A549 (cell line): ENCODE measurements at regions of chr11 and their contacts with region 1.

Region 1: GRCh38 chr11:93908689-93909088 is 58.3 kb upstream of the VSTM5 start:
- DNase-seq: peak in 1 of 2 experiments; percentile 20
- ATAC-seq: peak; percentile 54 to 69; a peak in 2 of 6 replicates
- H3K4me3 ChIP-seq: no peak overlapping the region
- H3K27ac ChIP-seq: no peak overlapping the region
- H3K4me1 ChIP-seq: 0 out of 3 replicates have a peak, but pooled peaks cover 6% of the 10 kb centered on the region
- CTCF ChIP-seq: no peak
- EP300 ChIP-seq: no peak
- POLR2A ChIP-seq: no peak
- RAD21 ChIP-seq: no peak

Region 2: DNA sequence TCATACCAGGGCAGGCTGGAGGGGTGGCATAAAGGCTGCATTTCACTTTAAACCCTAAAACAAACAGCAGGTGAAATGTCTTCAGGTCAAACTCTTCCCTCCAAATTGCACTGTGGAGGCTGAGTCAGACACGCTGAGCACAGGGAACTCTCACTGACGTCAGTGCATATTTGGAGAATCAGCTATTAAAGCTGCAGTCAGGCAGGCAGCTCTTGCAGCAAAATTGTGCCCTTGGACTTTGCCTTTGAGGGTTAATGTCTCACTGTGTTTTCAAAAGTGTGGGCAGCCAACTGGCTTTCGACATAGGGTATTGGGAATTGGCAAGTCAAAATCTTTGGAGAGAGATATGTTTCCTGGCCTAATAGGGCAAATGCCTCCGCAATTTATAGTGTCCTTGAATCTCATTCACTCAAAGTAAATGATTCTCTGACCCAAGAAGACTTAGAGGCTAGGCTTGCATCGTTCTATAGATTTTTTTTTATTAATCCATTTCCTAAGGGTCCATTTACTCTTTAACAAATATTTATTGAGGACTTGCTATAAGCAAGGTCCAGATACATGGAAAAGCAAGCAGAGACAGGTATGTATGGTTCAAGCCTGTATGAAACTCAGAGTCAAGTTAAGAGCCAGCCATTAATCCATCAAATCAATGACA is 337.8 kb before region 1 on chr11:
- CTCF ChIA-PET with region 1: no interaction called
- POLR2A ChIA-PET with region 1: no interaction called
- DNase-seq: peak; percentile 35 to 64
- ATAC-seq: peak; percentile 85 to 89
- H3K4me3 ChIP-seq: no peak overlapping the region
- H3K27ac ChIP-seq: peak overlapping the region; percentile 58 to 69
- H3K4me1 ChIP-seq: peaks cover 51% of the 10 kb centered on the region
- CTCF ChIP-seq: no peak
- EP300 ChIP-seq: peak in 1 of 2 experiments; percentile 48; a peak in 1 of 5 replicates
- POLR2A ChIP-seq: no peak
- RAD21 ChIP-seq: 0 out of 5 replicates have a peak, but pooled peaks of 1 of the 2 experiments have one; percentile 23

Region 3: GRCh38 chr11:93895106-93895862 is 13.4 kb before region 1 on chr11:
- CTCF ChIA-PET with region 1: interaction called, 23 read pairs
- POLR2A ChIA-PET with region 1: no interaction called
- DNase-seq: peak in 1 of 2 experiments; percentile 53
- ATAC-seq: peak; percentile 77 to 83
- H3K4me3 ChIP-seq: no peak overlapping the region
- H3K27ac ChIP-seq: no peak overlapping the region
- H3K4me1 ChIP-seq: no peaks in the 10 kb centered on the region
- CTCF ChIP-seq: peak; percentile 65
- EP300 ChIP-seq: no peak
- POLR2A ChIP-seq: no peak
- RAD21 ChIP-seq: peak; percentile 78 to 85

Region 4: GRCh38 chr11:93921695-93922468 is 13.2 kb after region 1 on chr11:
- CTCF ChIA-PET with region 1: interaction called, 10 read pairs
- POLR2A ChIA-PET with region 1: no interaction called
- DNase-seq: peak; percentile 30 to 51
- ATAC-seq: peak; percentile 56 to 87; a peak in 4 of 6 replicates
- H3K4me3 ChIP-seq: no peak overlapping the region
- H3K27ac ChIP-seq: no peak overlapping the region
- H3K4me1 ChIP-seq: no peaks in the 10 kb centered on the region
- CTCF ChIP-seq: peak; percentile 44
- EP300 ChIP-seq: no peak
- POLR2A ChIP-seq: no peak
- RAD21 ChIP-seq: peak; percentile 52 to 75

Region 5: GRCh38 chr11:94417386-94417987 is 508.8 kb after region 1 on chr11:
- CTCF ChIA-PET with region 1: interaction called, 10 read pairs
- POLR2A ChIA-PET with region 1: no interaction called
- DNase-seq: peak in 1 of 2 experiments; percentile 28
- ATAC-seq: peak in 1 of 2 experiments; percentile 72; a peak in 2 of 6 replicates
- H3K4me3 ChIP-seq: no peak overlapping the region
- H3K27ac ChIP-seq: no peak overlapping the region
- H3K4me1 ChIP-seq: no peaks in the 10 kb centered on the region
- CTCF ChIP-seq: peak; percentile 55
- EP300 ChIP-seq: no peak
- POLR2A ChIP-seq: no peak
- RAD21 ChIP-seq: peak; percentile 59; a peak in 4 of 5 replicates